Activated T-helper 1 cell treated with anti-CD3 and anti-CD28 coated beads, Interleukin-12 subunit alpha, Interleukin-12 subunit beta, Interleukin-2, Interleukin-4 antibody, amounts not matched to agents 30 ng/mL and 10 ng/mL and 1 ng/mL, durations not matched to agents 14 hours and 24 hours and 36 hours (primary cell): ENCODE measurements at regions of chr6 and their contacts with region 1.

Region 1: DNA sequence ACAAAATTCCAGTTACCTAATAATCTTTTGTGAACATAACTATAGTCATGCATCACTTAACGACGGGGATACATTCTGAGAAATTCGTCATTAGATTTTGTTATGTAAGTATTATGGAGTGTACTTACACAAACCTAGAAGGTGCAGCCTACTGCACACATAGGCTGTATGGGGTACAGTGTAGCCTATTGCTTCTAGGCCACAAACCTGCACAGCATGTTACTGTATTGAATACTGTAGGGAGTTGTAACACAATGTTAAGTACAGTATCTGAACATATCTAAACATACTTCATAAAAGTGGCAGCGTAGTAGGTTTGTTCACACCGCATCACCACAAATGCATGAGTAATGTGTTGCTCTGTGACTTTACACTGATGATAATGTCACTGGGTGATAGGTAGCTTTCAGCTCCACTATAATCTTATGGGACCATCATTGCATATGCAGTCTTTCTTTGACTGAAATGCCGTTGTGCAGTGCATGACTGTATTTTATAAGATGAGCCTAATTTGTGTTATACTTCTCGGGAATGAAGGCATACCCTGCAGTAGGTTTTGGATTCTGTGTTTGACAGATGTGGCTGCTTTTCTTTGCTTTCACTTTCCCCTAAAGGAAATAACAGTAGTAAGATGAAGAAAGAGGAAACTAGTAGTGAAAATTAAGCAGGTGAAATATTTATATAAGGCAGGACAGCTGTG is 365.6 kb downstream of the FARS2 start:
- DNase-seq: peak; percentile 1
- H3K4me3 Mint-ChIP-seq: no peak overlapping the region
- H3K27ac Mint-ChIP-seq: peak overlapping the region; percentile 40
- H3K4me1 Mint-ChIP-seq: peaks cover 18% of the 10 kb centered on the region
- H3K27me3 Mint-ChIP-seq: no peaks in the 10 kb centered on the region

Region 2: GRCh38 chr6:5511954-5512353 is 114.9 kb before region 1 on chr6:
- intact Hi-C with region 1: loop called (anchors 10 kb)
- DNase-seq: no peak
- H3K4me3 Mint-ChIP-seq: no peak overlapping the region
- H3K27ac Mint-ChIP-seq: no peak overlapping the region
- H3K4me1 Mint-ChIP-seq: peaks cover 17% of the 10 kb centered on the region
- H3K27me3 Mint-ChIP-seq: no peaks in the 10 kb centered on the region